AG04450 (cell line): ENCODE measurements at regions of chr3 and their contacts with region 1.

Region 1: DNA sequence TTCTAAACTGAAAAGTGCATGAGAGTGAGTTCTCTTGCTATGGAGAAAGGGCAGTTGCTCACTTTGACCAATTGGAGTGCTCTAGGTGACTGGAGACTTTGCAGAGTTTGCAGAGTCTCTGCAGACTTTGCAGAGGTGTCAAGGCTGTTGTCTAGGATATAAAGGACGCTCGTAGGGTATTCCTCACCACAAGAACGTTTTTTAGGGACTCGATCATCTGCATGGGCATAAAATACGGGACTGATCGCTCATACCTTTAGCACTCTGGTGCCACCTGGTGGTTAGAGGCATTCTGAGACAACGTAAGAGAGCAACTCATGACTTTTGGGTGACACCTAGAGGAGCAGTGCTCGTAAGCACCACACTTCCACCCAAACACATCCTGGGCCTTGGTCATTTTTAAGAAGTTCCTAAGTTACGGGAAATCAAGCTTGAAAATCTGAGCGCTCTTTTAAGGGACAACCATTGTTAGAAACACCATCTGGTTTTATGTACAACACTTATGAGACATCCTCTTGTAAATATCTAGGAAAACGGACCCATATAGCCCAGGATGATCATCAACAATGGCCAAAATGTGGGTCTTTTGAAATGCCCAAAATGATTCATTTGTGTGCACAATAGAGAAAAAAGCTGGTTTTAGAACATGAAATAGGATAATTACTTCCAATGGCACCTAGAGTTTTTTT is 51.6 kb upstream of the XCR1 start:
- DNase-seq: peak; percentile 90
- H3K4me3 ChIP-seq: no peak overlapping the region
- H3K27ac ChIP-seq: no peak overlapping the region
- H3K27me3 ChIP-seq: peaks cover 4% of the 10 kb centered on the region
- CTCF ChIP-seq: peak; percentile 100

Region 2: DNA sequence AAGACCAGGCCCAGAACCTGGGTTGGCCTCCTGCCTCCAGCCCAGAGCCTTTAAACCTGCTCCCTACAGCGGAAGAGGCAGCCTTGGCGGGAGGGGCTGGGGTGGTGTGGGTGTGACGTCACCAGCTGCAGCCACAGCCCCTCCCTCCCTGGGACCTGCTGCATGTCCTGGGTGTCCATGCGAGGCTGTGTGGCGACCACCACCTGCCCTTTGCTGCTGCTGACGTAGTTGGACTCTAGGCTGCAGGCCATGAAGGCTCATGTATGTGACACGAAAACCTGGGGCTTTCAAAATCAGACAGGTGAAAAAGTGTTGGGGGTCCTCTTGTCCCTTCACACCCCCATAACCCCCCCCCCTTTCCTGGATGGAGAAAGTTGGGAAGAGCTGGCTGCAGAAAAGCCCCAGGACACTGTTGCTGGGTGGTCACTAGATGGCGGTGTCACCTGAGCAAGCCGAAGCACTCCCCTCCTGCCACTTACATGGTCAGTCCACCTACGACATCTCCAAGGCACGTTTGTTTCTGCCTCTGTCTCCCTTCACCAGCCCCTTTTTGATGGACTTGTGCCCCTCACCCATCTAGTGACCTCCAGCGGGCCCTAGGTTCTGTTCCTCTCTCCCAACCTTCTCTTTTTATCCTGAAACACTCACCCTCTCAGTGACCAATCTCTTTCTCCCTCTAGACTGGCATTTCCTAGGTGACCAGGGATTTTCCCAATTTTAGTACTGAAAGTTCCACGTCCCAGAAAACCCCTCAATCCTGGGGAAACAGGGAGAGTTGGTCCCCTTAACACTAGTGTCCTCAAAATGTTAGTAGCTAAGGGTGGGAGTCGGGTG is 317.8 kb before region 1 on chr3:
- CTCF ChIA-PET with region 1: interaction called, 30 read pairs
- POLR2A ChIA-PET with region 1: no interaction called
- DNase-seq: peak; percentile 55
- H3K4me3 ChIP-seq: no peak overlapping the region
- H3K27ac ChIP-seq: no peak overlapping the region
- H3K27me3 ChIP-seq: peaks cover 18% of the 10 kb centered on the region
- CTCF ChIP-seq: peak; percentile 89

Region 3: GRCh38 chr3:45929042-45929679 is 149.7 kb before region 1 on chr3:
- CTCF ChIA-PET with region 1: interaction called, 420 read pairs
- POLR2A ChIA-PET with region 1: no interaction called
- DNase-seq: no peak
- H3K4me3 ChIP-seq: no peak overlapping the region
- H3K27ac ChIP-seq: no peak overlapping the region
- H3K27me3 ChIP-seq: no peaks in the 10 kb centered on the region
- CTCF ChIP-seq: peak; percentile 92

Region 4: GRCh38 chr3:45948311-45948781 is 130.5 kb before region 1 on chr3:
- CTCF ChIA-PET with region 1: interaction called, 32 read pairs
- POLR2A ChIA-PET with region 1: no interaction called
- DNase-seq: peak; percentile 42
- H3K4me3 ChIP-seq: no peak overlapping the region
- H3K27ac ChIP-seq: peak overlapping the region; percentile 77
- H3K27me3 ChIP-seq: no peaks in the 10 kb centered on the region
- CTCF ChIP-seq: no peak

Region 5: DNA sequence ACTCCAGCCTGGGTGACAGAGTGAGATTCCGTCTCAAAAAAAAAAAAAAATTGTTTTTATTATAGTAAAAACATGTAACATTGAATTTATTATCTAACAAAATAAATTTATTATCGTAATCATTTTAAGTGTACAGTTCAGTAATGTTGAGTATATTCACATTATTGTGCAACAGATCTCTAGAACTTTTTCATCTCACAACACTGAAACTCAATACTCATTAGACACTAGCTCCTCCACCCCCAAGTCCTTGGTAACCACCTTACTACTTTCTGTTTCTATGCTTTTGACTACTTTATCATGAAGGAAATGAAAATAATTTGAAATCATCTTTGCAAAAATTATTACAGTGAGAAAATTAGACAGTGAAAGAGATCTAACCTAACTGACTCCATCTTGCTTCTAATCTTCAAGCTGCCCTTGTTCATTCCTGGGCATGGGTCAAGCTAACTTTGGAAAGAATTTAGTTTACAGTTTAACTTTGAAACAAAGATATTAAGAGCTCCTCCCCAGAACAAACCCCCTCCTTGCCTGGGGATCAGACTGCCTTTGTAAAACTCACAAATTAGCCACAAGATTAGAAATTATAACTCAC is 68.2 kb before region 1 on chr3:
- CTCF ChIA-PET with region 1: interaction called, 18 read pairs
- POLR2A ChIA-PET with region 1: no interaction called
- DNase-seq: no peak
- H3K4me3 ChIP-seq: no peak overlapping the region
- H3K27ac ChIP-seq: no peak overlapping the region
- H3K27me3 ChIP-seq: peaks cover 12% of the 10 kb centered on the region
- CTCF ChIP-seq: no peak

Region 6: DNA sequence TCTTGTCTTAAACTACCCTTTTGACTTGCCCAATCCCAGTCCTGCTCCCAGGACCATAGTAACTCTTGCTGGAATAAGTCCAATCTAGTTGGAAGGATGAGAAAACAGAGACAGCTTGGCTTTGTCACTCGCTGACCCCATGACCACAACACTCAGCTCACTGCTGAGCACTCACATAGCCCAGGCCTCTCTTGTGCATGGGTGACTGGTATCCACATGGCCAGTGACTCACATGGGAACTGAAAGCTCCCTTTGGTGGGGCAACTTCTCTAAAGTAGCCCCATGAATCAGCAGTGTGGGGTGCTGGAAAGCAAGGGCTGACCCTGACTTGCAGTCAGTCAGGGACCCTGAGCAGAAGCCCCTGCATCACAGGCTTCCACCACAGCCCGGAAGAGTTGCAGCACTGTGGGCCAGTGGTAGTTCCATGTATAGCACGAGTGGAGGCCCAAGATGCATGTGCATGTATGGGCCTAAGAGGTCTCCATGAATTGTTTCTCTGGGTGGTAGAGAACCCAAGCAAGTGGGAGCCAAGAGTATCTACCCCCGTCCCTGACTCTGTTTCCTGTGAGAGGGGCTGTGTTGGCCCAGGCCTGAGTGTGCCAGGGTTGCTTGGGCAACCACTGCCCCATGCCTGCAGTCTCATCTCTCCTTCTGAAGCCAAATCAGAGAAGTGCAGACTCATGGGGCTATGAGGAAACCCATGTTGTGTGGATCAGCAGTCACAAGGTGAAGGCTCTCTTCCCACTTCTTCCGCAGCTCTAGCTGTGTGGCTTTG is 10.6 kb after region 1 on chr3:
- CTCF ChIA-PET with region 1: interaction called, 20 read pairs
- POLR2A ChIA-PET with region 1: no interaction called
- DNase-seq: peak; percentile 65
- H3K4me3 ChIP-seq: no peak overlapping the region
- H3K27ac ChIP-seq: no peak overlapping the region
- H3K27me3 ChIP-seq: no peaks in the 10 kb centered on the region
- CTCF ChIP-seq: no peak

Region 7: DNA sequence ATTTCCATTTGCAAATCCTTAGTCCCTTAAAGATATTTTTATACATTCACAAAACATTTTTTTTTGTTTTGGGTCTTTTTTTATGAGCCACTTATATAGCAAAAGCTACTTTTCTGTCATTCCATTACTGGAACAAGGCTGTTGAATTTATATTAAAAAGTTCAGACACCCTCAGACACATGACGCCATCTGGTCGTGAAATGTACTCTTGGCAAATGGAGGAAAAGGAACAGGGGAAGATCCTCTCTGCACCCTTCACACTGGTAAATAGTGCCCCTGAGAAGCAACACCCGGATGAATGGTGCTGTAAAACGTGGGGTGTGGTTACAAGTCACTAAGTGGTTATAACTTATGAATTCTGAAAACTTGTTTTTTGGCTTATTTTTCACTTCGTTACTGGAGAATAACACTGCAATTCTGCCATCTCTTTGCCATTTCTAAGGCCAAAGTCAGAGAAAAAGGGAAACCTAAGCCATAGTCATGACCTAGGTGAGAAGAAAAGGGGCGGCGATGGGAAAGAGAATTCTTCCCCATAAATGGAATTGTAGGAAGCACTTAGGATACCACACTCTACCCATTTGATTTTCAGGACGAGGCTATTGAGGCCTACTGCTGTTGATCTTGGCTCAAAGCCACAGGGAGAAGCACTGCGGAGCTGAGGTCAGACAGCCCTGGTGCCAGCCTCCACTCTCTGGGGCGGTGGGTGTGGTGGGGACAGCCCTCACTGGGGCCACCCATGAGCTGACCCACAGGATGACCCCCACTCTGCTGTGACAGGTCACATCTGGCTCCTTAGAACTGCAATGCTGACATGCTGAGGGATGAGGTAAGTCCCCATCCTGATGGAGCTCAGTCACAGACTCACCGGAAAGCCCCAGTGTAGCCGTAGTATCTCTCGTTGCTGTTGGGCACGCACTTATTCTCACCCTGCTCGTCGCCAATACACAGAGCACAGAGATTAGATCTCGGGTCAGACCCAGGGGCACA is 364.0 kb after region 1 on chr3:
- CTCF ChIA-PET with region 1: interaction called, 14 read pairs
- POLR2A ChIA-PET with region 1: no interaction called
- DNase-seq: peak; percentile 6
- H3K4me3 ChIP-seq: no peak overlapping the region
- H3K27ac ChIP-seq: no peak overlapping the region
- H3K27me3 ChIP-seq: peaks cover 18% of the 10 kb centered on the region
- CTCF ChIP-seq: peak; percentile 66